HEK293 (cell line): ENCODE measurements at regions of chr13 and their contacts with region 1.

Region 1: GRCh38 chr13:51286135-51287002 is 53.1 kb upstream of the SERPINE3 start:
- H3K4me3 ChIP-seq: no peak overlapping the region
- H3K27ac ChIP-seq: no peak overlapping the region
- H3K4me1 ChIP-seq: no peaks in the 10 kb centered on the region
- CTCF ChIP-seq: 0 out of 2 replicates have a peak, but pooled peaks have one; percentile 31

Region 2: GRCh38 chr13:51125498-51126226 is 160.7 kb before region 1 on chr13:
- CTCF ChIA-PET with region 1: interaction called, 112 read pairs
- POLR2A ChIA-PET with region 1: no interaction called
- H3K4me3 ChIP-seq: no peak overlapping the region
- H3K27ac ChIP-seq: no peak overlapping the region
- H3K4me1 ChIP-seq: no peaks in the 10 kb centered on the region
- CTCF ChIP-seq: peak; percentile 42; the same call in 1 of the 2 replicates

Region 3: DNA sequence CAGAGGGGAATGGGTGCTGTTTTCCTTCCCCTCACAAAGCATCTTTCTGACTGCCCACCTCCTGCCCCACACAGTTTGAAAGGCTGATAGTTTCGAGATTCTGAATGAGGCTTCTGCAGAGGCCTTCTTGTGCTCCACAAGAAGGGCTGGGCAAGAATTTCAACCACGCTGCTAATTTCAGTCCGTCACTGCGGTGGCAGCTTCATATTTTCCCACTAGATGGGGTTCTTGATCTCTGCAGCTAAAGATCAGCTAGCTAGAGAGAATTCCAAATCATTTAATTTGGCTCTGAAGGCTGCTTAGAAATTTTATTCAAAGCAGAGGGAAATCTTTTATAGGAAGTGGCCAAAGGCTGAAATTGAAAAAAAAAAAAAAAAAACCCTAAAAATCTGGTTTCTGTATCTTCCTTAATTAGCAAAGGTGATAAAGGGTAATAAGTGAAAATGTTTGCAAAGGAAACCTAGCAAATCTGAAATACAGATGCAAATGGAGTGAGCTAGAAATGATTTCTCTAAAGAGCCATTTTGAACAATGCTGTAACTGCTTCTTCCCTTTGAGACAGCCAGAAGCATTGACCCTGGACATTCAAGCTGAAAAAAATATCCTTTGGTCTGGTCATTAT is 137.3 kb before region 1 on chr13:
- CTCF ChIA-PET with region 1: interaction called, 40 read pairs
- POLR2A ChIA-PET with region 1: no interaction called
- H3K4me3 ChIP-seq: no peak overlapping the region
- H3K27ac ChIP-seq: no peak overlapping the region
- H3K4me1 ChIP-seq: no peaks in the 10 kb centered on the region
- CTCF ChIP-seq: no peak

Region 4: DNA sequence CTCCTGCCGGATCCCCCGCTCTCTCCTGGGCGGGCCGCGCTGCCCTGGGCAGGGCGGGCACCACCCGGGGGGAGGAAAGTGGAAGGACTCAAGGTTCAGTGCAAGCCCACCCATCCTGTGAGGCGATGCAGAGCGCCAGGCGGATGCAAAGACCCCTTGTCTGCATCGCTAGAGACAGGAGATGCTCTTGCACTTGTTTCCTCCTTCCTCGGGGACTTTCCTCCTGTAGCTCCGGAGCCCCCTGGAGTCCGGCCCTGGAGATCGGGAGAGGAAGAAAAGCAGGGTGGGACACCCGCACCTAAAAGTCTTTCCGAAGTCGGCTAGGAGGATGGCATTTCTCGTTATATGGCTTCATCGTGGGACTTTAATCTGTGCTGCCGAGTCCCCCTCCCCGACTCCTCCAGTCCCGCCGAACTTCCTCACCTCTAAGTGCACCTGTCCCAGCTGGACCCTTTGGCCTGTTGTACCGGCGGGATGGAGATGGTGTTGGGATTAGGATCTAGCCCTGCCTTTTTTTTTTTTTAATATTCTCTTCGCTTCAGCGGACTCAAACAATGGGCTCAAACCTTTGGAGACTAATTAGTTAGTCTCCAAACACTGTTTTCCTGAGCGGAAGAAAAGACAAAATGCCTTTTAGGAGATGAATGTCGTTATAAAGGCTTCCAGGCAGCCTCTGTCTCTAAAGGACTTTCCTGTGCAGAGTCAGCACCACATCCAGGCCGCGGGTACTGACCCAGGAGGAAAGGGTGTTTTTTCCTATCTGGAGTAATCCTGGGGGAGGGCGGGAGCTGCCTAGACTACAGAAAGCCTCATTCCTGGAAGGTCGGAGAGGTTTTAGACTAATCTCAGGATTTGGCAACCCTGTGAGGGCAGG is 63.4 kb before region 1 on chr13:
- CTCF ChIA-PET with region 1: interaction called, 14 read pairs
- POLR2A ChIA-PET with region 1: no interaction called
- H3K4me3 ChIP-seq: peak overlapping the region; percentile 72
- H3K27ac ChIP-seq: peak overlapping the region; percentile 58; the same call in 1 of the 2 replicates
- H3K4me1 ChIP-seq: no peaks in the 10 kb centered on the region
- CTCF ChIP-seq: no peak; the same call in 1 of the 2 replicates

Region 5: DNA sequence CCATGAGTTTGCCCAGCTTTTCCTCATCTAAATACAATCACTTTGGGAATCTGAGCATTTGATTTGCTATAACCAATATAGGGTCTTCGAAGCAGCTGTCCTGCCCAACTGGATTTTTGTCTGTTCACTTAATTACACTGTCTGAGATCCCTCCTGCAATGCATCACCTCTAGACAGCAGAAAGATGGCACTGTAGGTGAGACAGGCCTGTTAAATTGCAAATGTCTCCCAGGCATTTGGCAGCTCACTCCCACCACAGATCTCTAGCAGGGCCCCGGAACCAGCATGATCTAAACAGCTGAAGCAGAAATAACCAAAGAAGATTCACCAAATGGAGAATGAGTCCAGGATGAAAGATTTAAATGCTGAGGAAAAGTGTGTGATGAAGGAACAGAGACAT is 11.2 kb after region 1 on chr13:
- CTCF ChIA-PET with region 1: interaction called, 46 read pairs
- POLR2A ChIA-PET with region 1: no interaction called
- H3K4me3 ChIP-seq: no peak overlapping the region
- H3K27ac ChIP-seq: no peak overlapping the region
- H3K4me1 ChIP-seq: no peaks in the 10 kb centered on the region
- CTCF ChIP-seq: no peak

Region 6: GRCh38 chr13:51308781-51309180 is 22.4 kb after region 1 on chr13:
- CTCF ChIA-PET with region 1: interaction called, 15 read pairs
- POLR2A ChIA-PET with region 1: no interaction called
- H3K4me3 ChIP-seq: no peak overlapping the region
- H3K27ac ChIP-seq: no peak overlapping the region
- H3K4me1 ChIP-seq: no peaks in the 10 kb centered on the region
- CTCF ChIP-seq: no peak

Region 7: DNA sequence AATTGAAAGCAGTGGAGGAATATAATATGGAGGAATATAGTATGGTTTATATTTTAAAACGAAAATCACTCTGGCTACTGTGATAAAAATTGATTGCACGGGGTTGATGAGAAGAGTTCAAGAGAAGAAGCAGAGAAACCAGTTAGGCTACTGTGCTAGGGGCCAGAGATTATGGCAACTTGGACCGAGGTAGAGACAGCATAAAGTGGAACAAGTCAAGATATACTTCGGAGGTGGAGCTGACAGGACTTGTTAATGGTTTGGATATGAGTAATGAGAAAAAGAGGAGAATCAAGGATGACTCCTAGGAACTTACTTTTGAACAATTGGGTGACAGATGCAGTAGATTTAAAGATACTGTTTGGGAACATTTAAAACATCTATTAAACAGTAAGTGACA is 291.3 kb after region 1 on chr13:
- CTCF ChIA-PET with region 1: no interaction called
- POLR2A ChIA-PET with region 1: no interaction called
- H3K4me3 ChIP-seq: no peak overlapping the region
- H3K27ac ChIP-seq: no peak overlapping the region
- H3K4me1 ChIP-seq: no peaks in the 10 kb centered on the region
- CTCF ChIP-seq: no peak

Region 8: DNA sequence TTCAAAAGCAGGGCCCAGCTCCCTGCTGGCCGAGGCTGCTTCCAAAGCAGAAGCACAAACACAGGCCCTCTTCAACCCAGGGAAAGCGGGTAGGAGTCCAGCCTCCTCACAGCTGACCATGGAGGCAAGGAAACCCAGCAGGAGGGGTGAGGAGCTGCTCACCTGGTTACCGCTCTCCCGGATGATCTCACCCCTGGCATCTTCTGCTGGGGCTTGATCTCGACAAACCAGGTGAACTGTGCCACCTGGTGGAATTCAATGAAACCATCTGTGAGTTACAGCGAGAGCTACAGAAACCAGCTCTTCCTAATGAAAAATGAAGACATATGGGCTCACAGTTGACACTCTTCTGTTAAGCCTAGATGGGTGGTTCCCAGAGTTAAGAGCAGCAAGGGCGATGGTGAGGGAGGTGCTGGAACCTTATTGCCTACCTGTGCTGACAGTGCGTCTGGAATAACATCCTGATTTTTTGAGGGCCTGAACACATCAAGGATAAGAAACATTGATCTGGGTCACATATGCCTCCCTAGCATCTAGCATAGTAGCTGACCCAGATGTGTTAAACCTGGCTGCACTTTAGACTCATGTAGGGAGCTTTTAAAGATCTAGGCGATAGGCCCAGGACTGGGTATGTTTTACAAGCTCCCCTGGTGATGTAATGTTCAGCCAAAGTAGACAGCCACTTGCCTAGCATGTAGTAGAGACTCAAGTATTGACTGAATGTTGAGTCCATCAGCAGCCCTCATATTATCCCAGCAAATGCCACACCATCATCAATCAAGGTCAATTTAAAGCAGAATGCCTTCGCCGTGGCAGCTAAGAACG is 511.5 kb after region 1 on chr13:
- CTCF ChIA-PET with region 1: interaction called, 12 read pairs
- POLR2A ChIA-PET with region 1: no interaction called
- H3K4me3 ChIP-seq: no peak overlapping the region
- H3K27ac ChIP-seq: no peak overlapping the region
- H3K4me1 ChIP-seq: peaks cover 5% of the 10 kb centered on the region
- CTCF ChIP-seq: no peak; the same call in 1 of the 2 replicates